ENCODE measurements at regions of chr7 and their contacts with region 1.

Region 1: DNA sequence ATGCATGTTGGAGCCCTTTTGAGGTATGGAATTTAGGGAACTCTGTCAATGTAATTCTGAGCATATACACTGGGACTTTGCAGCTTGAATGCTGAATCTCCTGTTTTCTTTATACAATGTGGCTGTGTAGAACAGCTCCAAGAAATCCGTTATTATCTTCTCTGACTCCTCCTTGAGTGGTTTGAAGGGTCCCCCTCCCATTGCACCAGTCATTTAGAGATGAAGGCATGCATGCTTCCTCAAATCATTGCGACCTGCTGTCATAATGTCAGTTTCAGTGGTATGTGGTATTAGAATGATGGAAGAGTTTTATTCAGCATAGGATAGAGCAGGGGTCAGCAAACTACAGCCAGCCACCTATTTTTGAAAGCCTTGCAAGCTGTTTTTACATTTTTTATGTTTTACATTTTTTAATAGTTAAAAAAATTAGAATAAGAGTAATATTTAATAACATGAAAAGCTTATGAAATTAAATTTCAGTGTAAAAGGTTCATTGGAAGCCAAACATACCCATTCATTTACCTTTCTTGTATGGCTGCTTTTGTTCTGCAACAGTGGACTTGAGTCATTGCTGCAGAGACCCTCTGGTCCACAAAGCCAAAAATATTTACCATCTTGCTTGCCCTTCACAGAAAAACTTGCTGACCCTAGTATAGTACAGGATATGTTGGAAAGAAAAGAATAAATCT is 8.1 kb downstream of the STK17A start:
- DNase-seq: peak; percentile 48
- ATAC-seq: peak; percentile 21
- H3K4me3 ChIP-seq: peak overlapping the region in 1 of 5 experiments; percentile 19
- H3K4me3 Mint-ChIP-seq: peak overlapping the region; percentile 72
- H3K27ac ChIP-seq: peak overlapping the region; percentile 19 to 65
- H3K27ac Mint-ChIP-seq: peak overlapping the region; percentile 75
- H3K4me1 ChIP-seq: peaks cover 73 to 91% of the 10 kb centered on the region in 2 donors
- H3K4me1 Mint-ChIP-seq: peaks cover 78% of the 10 kb centered on the region
- H3K27me3 ChIP-seq: no peaks in the 10 kb centered on the region
- H3K27me3 Mint-ChIP-seq: no peaks in the 10 kb centered on the region
- CTCF ChIP-seq: no peak

Region 2: DNA sequence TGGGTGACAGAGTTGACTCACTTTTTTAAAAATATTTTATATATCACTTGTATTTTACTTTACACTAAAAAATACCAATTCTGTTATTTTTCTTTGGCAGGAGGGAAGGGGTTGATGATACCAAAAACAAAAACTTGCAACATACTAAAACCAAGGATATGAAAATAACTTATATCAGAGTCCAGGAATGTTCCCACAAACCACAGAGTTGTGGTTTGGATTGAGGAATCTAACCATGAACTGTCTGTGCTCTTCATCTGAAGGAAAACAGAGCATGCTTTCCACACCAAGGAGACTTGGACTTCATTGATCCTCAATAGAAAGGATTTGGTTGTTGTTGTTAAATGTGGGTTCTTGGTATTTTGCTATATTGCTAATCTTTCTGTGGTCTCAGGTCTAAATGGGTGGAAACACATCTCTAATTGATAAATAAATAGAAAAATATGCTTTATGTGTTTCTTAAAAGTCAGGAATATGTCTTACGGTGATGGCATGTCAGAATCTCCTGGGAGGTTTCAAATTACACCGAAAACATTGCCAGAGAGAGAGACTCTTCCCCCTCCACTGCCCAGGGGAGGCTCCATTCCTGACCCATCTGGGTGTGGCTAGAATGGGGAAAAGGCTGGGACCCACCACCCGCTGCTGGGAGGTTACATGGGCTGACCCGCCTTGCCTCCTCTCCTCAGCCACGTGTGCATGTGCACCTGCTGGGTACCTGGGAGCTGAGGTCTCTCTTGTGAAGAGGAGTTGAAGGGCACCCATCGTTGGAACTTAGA is 55.0 kb before region 1 on chr7:
- CTCF ChIA-PET with region 1: no interaction called
- POLR2A ChIA-PET with region 1: no interaction called
- intact Hi-C with region 1: no loop called
- DNase-seq: no peak
- ATAC-seq: no peak
- H3K4me3 ChIP-seq: no peak overlapping the region
- H3K4me3 Mint-ChIP-seq: no peak overlapping the region
- H3K27ac ChIP-seq: no peak overlapping the region
- H3K27ac Mint-ChIP-seq: no peak overlapping the region
- H3K4me1 ChIP-seq: no peaks in the 10 kb centered on the region
- H3K4me1 Mint-ChIP-seq: no peaks in the 10 kb centered on the region
- H3K27me3 ChIP-seq: no peaks in the 10 kb centered on the region
- H3K27me3 Mint-ChIP-seq: peaks cover 18% of the 10 kb centered on the region
- CTCF ChIP-seq: no peak

Region 3: DNA sequence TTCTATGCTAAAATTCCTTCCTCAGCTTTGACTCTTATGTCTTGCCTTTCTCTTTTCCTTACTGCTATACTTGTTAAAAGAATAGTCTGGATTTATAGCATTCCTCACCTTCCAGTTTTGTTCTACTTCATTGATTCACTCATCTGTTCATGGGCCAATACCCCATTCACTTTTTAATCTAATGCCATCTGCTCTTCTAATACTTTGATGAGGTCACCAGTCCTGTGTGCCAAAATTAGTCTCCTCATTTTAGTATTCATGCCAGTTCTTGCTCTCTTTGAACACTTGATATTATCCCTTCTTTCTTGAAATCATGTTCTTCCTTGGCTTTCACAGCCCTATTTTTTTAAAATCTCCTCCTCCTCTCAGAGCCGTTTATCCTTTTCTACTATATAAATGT is 11.3 kb after region 1 on chr7:
- CTCF ChIA-PET with region 1: interaction called, 4 read pairs
- POLR2A ChIA-PET with region 1: interaction called, 4 read pairs
- intact Hi-C with region 1: loop called (anchors 2 kb)
- DNase-seq: no peak
- ATAC-seq: no peak
- H3K4me3 ChIP-seq: no peak overlapping the region
- H3K4me3 Mint-ChIP-seq: no peak overlapping the region
- H3K27ac ChIP-seq: peak overlapping the region in 1 of 2 donors; percentile 67
- H3K27ac Mint-ChIP-seq: no peak overlapping the region
- H3K4me1 ChIP-seq: peaks cover 27 to 58% of the 10 kb centered on the region in 2 donors
- H3K4me1 Mint-ChIP-seq: peaks cover 38% of the 10 kb centered on the region
- H3K27me3 ChIP-seq: no peaks in the 10 kb centered on the region
- H3K27me3 Mint-ChIP-seq: no peaks in the 10 kb centered on the region
- CTCF ChIP-seq: no peak

Measured in B cell (primary cell).